Lower lobe of right lung (tissue), 2 donors: ENCODE measurements at regions of chr5 and their contacts with region 1.

Region 1: GRCh38 chr5:134184155-134185135 is 7.7 kb upstream of the SKP1 start:
- DNase-seq: peak; percentile 73
- ATAC-seq: peak; percentile 90 to 94
- H3K4me3 ChIP-seq: no peak overlapping the region
- H3K27ac ChIP-seq: no peak overlapping the region
- H3K4me1 ChIP-seq: no peaks in the 10 kb centered on the region
- H3K27me3 ChIP-seq: no peaks in the 10 kb centered on the region
- CTCF ChIP-seq: peak; percentile 92

Region 2: DNA sequence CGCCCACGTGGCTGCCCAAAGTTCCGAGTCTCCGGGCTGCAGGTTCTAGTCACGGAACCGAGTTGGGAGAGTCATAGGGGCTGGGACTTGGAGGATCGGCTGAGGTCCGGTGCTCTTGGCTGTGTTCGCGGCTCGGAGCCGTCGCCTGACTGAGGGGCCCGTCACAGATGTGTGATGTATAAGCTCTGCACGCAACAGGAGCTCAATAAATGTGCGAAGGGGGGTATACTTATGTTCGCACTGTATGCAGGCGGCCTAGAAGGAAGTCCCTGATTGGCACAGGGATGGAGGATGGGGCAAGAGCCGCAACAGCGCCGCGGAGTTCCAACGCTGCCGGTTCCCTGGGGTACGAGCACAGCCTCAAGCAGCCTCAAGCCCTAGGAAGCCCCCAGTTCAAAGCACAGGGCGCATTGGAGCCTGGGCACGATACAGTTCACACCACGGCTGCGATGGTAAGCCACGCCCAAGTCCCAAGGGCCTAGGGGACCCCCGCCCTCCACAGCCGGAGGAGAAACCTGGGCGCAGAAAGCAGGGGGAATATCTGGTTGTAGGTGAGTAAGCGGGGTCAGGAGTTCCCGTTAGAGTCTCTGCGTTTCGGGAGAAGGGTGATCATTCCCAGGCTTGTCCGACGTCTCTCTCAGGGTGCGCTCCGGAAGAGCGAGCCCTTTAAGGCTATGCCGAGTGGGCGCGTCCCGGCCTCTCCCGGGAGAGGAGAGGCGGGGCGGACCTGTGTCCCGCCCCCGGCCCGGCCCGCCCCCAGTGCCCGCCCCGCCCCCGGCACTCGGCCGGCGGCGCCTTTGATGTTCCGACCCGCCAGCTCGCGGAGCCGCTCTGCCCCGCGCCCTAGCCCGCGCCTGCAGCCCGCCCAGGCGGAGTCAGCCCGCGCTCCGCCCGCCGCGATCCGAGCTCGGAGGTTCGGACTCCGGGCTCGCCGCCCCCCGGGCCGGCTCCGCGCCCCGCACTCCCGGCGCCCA is 70.3 kb before region 1 on chr5 and contains the start of gene TCF7:
- intact Hi-C with region 1: no loop called
- DNase-seq: peak; percentile 82
- ATAC-seq: peak; percentile 95 to 97
- H3K4me3 ChIP-seq: peak within 1 kb of the TSS; percentile 74
- H3K27ac ChIP-seq: no peak within 1 kb of the TSS
- H3K4me1 ChIP-seq: peaks cover 18% of the 10 kb centered on the region
- H3K27me3 ChIP-seq: peaks cover 10% of the 10 kb centered on the region
- CTCF ChIP-seq: no peak
- total RNA-seq, gene TCF7: 5.7 TPM

Region 3: DNA sequence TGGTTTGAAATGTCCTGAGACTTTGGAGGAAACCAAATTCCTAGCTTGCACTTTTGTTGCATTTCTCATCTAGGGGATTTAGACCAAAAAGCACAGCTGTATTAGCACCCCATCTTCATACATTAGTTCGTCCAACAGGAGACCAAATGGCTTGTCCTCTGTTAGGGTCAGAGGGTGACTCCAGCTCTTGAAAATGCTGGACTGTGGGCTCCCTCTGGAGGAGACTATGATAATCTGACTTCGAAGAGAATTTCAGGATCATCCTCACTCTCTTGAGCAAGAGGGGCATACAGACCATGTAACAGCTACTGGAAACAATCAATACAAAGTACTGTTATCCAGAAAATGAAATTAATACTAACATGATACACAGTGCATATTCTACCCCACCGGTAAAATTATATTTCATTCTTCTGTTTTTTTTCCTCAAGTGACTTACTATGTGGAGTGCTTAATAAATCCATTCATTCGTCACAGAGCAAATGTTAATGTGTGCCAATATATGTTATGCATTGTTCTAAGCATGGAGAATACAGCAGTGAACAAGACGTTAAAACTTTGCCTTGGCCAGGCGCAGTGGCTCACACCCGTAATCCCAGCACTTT is 105.2 kb after region 1 on chr5:
- intact Hi-C with region 1: loop called (anchors 5 kb)
- DNase-seq: no peak
- ATAC-seq: peak; percentile 92 to 95
- H3K4me3 ChIP-seq: no peak overlapping the region
- H3K27ac ChIP-seq: no peak overlapping the region
- H3K4me1 ChIP-seq: no peaks in the 10 kb centered on the region
- H3K27me3 ChIP-seq: no peaks in the 10 kb centered on the region
- CTCF ChIP-seq: peak; percentile 67